BJ (cell line): ENCODE measurements at regions of chr9 and their contacts with region 1.

Region 1: DNA sequence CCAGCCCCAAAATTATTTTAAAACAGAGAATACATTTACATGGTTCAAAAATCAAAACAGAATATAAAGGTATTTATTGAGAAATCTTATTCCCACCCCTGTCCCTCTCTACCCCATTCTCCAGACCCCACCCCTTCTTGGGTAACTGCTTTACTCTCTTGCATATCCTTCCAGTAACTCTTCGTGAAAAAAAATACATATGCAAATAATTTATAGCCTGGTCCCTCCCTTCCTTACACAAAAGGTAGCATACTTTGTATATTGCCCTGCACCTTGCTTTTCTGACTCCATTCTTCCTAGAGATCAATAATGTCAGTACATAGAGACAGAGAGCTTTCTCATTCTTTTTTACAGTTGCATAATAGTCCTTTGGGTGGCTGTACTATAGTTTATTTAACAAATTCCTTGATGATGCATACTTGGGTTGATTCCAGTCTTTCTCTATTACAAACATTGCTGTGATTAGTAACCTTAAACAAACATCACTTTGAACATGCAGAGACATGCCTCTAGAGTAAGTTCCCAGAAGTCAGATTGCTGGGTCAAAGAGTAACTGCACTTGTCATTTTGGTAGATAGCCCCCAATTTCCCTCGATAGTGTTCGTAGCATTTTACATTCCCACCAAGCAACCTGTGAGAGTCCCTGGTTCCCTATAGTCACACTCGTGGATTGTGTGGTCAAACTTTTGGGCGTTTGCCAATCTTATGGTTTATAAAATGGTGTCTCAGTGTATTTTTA is 47.8 kb downstream of the STOM start:
- DNase-seq: peak; percentile 88
- H3K4me3 ChIP-seq: no peak overlapping the region
- H3K27me3 ChIP-seq: no peaks in the 10 kb centered on the region
- CTCF ChIP-seq: no peak

Region 2: DNA sequence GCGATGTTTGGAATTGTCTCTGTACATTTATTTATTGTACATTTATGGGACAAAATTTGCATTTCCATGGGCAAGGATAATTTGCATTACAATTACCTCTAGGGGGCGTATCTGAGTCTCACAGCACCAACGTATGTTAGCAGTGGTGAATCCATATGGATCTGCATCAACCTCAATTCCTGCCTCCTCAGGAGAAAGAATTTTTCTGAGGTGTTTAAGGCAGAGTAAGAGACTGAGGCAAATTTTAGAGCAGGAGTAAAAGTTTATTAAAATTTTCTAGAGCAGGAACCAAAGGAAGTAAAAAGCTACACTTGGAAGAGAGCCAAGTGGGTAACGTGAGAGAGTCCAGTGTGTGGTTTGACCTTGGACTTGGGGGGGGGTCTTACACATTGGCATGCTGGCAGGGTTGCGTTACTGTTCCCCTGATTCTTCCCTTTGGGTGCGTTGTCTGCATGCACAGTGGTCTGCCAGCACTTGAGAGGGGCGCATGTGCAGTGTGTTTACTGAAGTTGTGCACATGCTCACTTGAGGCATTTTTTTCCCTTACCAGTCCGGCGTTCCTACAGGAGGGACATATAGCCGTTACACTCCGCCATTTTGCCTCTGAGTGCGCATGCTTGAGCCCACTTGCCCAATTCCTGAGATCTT is 99.6 kb before region 1 on chr9:
- CTCF ChIA-PET with region 1: interaction called, 13 read pairs
- POLR2A ChIA-PET with region 1: no interaction called
- DNase-seq: no peak
- H3K4me3 ChIP-seq: no peak overlapping the region
- H3K27me3 ChIP-seq: no peaks in the 10 kb centered on the region
- CTCF ChIP-seq: peak; percentile 72

Region 3: GRCh38 chr9:121286973-121287741 is 35.0 kb before region 1 on chr9:
- CTCF ChIA-PET with region 1: interaction called, 44 read pairs
- POLR2A ChIA-PET with region 1: no interaction called
- DNase-seq: peak; percentile 87
- H3K4me3 ChIP-seq: no peak overlapping the region
- H3K27me3 ChIP-seq: no peaks in the 10 kb centered on the region
- CTCF ChIP-seq: peak; percentile 38

Region 4: GRCh38 chr9:121339437-121339836 is 17.2 kb after region 1 on chr9:
- CTCF ChIA-PET with region 1: interaction called, 13 read pairs
- POLR2A ChIA-PET with region 1: no interaction called
- DNase-seq: no peak
- H3K4me3 ChIP-seq: no peak overlapping the region
- H3K27me3 ChIP-seq: no peaks in the 10 kb centered on the region
- CTCF ChIP-seq: no peak

Region 5: GRCh38 chr9:121376214-121376830 is 54.1 kb after region 1 on chr9:
- CTCF ChIA-PET with region 1: interaction called, 63 read pairs
- POLR2A ChIA-PET with region 1: interaction called, 12 read pairs
- DNase-seq: no peak
- H3K4me3 ChIP-seq: no peak overlapping the region
- H3K27me3 ChIP-seq: no peaks in the 10 kb centered on the region
- CTCF ChIP-seq: peak; percentile 28

Region 6: DNA sequence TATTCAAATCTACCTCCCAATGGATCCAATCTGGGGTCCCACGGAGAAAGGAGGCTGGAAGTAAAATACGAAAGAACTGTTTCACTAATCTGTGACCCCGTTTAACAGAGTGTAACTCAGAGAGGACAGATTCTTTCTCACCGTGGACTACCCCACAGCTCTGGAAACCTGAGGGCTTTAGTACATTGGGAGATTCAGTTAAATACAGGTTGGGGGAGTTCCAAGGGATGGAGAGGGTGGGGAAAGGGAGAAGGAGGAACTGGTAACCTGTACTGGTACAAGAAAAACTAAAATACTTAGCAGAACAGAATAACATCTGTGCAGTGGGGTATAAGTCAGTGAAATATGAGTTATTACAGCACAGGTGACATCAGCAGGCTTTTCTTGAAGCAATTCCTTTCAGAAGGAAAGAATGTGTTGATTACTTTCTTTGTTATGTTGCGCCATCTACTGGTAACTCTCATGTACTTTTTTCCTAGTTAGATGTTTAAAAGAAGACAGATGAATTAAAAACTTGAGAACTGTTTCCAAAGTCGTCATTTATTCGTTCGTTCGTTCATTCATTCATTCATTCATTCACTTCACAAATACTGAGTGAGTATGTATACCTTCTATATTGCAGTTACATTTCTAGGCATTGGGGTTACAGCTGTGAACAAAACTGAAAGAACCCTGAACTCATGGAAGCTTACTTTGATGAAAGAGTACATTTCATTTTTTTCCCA is 77.8 kb after region 1 on chr9:
- CTCF ChIA-PET with region 1: interaction called, 80 read pairs
- POLR2A ChIA-PET with region 1: interaction called, 3 read pairs
- DNase-seq: peak; percentile 51
- H3K4me3 ChIP-seq: no peak overlapping the region
- H3K27me3 ChIP-seq: no peaks in the 10 kb centered on the region
- CTCF ChIP-seq: peak; percentile 48